ENCODE measurements at regions of chr9 and their contacts with region 1.

Region 1: GRCh38 chr9:21812946-21813568 is 10.6 kb downstream of the MTAP start:
- DNase-seq: peak; percentile 65 to 80
- ATAC-seq: peak; percentile 84 to 92 (median 85)
- H3K4me3 ChIP-seq: no peak overlapping the region
- H3K27ac ChIP-seq: no peak overlapping the region
- H3K4me1 ChIP-seq: no peaks in the 10 kb centered on the region
- H3K27me3 ChIP-seq: no peaks in the 10 kb centered on the region
- CTCF ChIP-seq: peak; percentile 90

Region 2: DNA sequence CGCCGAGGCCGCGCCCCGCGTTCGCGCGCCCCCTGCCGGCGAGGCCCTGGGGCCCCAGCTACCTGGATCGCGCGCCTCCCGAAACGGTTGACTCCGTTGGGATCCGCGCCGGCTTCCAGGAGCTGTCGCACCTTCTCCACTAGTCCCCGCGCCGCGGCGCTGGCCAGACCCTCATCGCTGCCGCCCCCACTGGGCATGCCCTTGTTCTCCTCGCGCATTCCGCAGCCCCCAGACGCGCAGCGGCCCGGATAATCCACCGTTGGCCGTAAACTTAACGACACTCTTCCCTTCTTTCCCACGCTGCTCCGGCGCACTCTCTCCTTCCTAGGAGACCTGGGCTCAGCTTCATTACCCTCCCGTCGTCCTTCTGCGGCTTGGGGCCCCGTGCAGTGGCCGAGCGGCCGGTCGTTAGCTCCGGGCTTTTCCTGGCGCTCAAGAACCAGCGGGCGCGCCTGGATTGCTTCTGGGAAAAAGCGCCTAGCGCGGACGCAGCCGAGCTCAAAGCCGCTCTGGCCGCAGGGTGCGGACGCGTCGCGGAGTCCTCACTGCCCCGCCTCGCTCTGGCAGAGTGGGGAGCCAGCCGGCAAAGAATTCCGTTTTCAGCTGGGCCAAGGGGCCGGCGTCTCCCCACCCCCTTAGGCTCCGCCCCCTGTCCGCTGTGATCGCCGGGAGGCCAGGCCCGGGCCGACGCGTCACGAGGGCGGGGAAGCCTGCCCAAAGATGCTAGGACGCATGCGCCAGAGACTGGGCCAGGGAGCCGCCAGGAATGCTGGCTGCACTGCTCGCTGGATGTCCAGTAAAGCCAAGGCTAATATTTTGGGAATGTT is 195.9 kb after region 1 on chr9 and contains the start of gene CDKN2B:
- intact Hi-C with region 1: loop called (anchors 1 to 5 kb)
- DNase-seq: peak; percentile 97 to 98
- ATAC-seq: peak; percentile 96 to 97 (median 97)
- H3K4me3 ChIP-seq: peak within 1 kb of the TSS; percentile 88
- H3K27ac ChIP-seq: peak within 1 kb of the TSS; percentile 92
- H3K4me1 ChIP-seq: peaks cover 22% of the 10 kb centered on the region
- H3K27me3 ChIP-seq: peaks cover 0 to 2% (median 0%) of the 10 kb centered on the region in 3 donors
- CTCF ChIP-seq: peak; percentile 98
- total RNA-seq, gene CDKN2B: 5.4 to 12.3 (median 8.3) TPM

Region 3: GRCh38 chr9:22037954-22038690 is 225.1 kb after region 1 on chr9:
- intact Hi-C with region 1: loop called (anchors 2 to 10 kb)
- DNase-seq: no peak
- ATAC-seq: peak; percentile 58 to 82 (median 68)
- H3K4me3 ChIP-seq: no peak overlapping the region
- H3K27ac ChIP-seq: peak overlapping the region; percentile 75
- H3K4me1 ChIP-seq: peaks cover 36% of the 10 kb centered on the region
- H3K27me3 ChIP-seq: no peaks in the 10 kb centered on the region
- CTCF ChIP-seq: peak; percentile 68

Region 4: GRCh38 chr9:22119537-22120158 is 306.6 kb after region 1 on chr9:
- intact Hi-C with region 1: loop called in 1 of 2 experiments (anchors 2 kb)
- DNase-seq: no peak
- ATAC-seq: peak; percentile 64 to 86 (median 76)
- H3K4me3 ChIP-seq: no peak overlapping the region
- H3K27ac ChIP-seq: no peak overlapping the region
- H3K4me1 ChIP-seq: no peaks in the 10 kb centered on the region
- H3K27me3 ChIP-seq: no peaks in the 10 kb centered on the region
- CTCF ChIP-seq: peak; percentile 44

Region 5: GRCh38 chr9:22238809-22239684 is 426.0 kb after region 1 on chr9:
- intact Hi-C with region 1: loop called (anchors 2 kb)
- DNase-seq: no peak
- ATAC-seq: peak in 1 of 4 donors; percentile 63
- H3K4me3 ChIP-seq: no peak overlapping the region
- H3K27ac ChIP-seq: no peak overlapping the region
- H3K4me1 ChIP-seq: no peaks in the 10 kb centered on the region
- H3K27me3 ChIP-seq: no peaks in the 10 kb centered on the region
- CTCF ChIP-seq: peak; percentile 52

Region 6: DNA sequence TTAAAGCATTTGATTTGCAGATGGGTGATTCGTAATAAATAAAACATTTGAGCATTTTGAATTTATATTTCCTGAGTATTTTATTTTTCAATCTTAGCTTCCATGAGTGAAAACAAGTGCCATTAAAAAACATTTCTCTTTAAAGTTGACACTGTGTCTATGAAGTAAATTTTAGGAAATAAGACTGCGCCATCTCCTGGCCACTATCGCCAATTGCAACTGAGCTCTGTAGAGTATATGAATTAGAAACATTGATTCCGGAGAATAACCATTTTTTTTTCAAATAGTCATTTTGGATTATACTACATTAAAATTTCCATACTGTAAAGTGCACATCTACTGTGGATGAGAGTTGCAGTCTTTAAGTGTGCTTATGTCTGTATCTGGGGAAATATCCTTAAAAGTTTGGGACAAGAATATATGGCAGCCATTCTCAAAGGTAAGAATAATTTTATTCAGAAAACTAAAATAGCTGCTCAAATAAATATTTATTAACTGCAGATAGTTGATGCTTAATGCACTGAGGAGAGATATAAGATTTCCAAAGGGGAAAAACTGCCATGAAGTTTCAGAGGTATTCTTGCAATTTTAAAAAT is 639.5 kb after region 1 on chr9:
- intact Hi-C with region 1: loop called (anchors 5 kb)
- DNase-seq: peak in 1 of 2 donors; percentile 19
- ATAC-seq: peak in 3 of 4 donors; percentile 49 to 78 (median 69)
- H3K4me3 ChIP-seq: no peak overlapping the region
- H3K27ac ChIP-seq: no peak overlapping the region
- H3K4me1 ChIP-seq: peaks cover 4% of the 10 kb centered on the region
- H3K27me3 ChIP-seq: no peaks in the 10 kb centered on the region
- CTCF ChIP-seq: peak; percentile 90

Measured in psoas muscle (tissue), 8 donors.